ENCODE measurements at regions of chr11 and their contacts with region 1.

Region 1: GRCh38 chr11:18526521-18527296 is at the start of gene TSG101:
- DNase-seq: peak; percentile 86 to 96 (median 91)
- ATAC-seq: peak; percentile 91
- H3K4me3 ChIP-seq: peak within 1 kb of the TSS; percentile 94
- H3K4me3 Mint-ChIP-seq: peak within 1 kb of the TSS; percentile 93 to 100 (median 100)
- H3K27ac ChIP-seq: peak within 1 kb of the TSS; percentile 96
- H3K27ac Mint-ChIP-seq: peak within 1 kb of the TSS; percentile 99 to 100 (median 100)
- H3K4me1 ChIP-seq: peaks cover 18% of the 10 kb centered on the region in 2 donors
- H3K4me1 Mint-ChIP-seq: peaks cover 28 to 67% (median 55%) of the 10 kb centered on the region in 7 donors
- H3K27me3 ChIP-seq: no peaks in the 10 kb centered on the region
- H3K27me3 Mint-ChIP-seq: peaks cover 0 to 3% (median 0%) of the 10 kb centered on the region in 5 donors
- total RNA-seq, gene TSG101: 16.8 to 46.3 (median 36.3) TPM

Region 2: GRCh38 chr11:17077520-17078401 is 1448.9 kb before region 1 on chr11 and contains the start of gene RPS13:
- CTCF ChIA-PET with region 1: no interaction called
- POLR2A ChIA-PET with region 1: no interaction called
- intact Hi-C with region 1: loop called in 1 of 2 experiments (anchors 1 kb)
- DNase-seq: peak; percentile 76 to 95 (median 93)
- ATAC-seq: peak; percentile 98
- H3K4me3 ChIP-seq: peak within 1 kb of the TSS; percentile 87
- H3K4me3 Mint-ChIP-seq: peak within 1 kb of the TSS; percentile 91 to 99 (median 98)
- H3K27ac ChIP-seq: peak within 1 kb of the TSS; percentile 91
- H3K27ac Mint-ChIP-seq: peak within 1 kb of the TSS; percentile 96 to 99 (median 99)
- H3K4me1 ChIP-seq: peaks cover 12 to 27% of the 10 kb centered on the region in 2 donors
- H3K4me1 Mint-ChIP-seq: peaks cover 25 to 60% (median 37%) of the 10 kb centered on the region in 7 donors
- H3K27me3 ChIP-seq: no peaks in the 10 kb centered on the region
- H3K27me3 Mint-ChIP-seq: no peaks in the 10 kb centered on the region
- total RNA-seq, gene RPS13: 1,062 to 2,591 (median 2,234) TPM

Region 3: DNA sequence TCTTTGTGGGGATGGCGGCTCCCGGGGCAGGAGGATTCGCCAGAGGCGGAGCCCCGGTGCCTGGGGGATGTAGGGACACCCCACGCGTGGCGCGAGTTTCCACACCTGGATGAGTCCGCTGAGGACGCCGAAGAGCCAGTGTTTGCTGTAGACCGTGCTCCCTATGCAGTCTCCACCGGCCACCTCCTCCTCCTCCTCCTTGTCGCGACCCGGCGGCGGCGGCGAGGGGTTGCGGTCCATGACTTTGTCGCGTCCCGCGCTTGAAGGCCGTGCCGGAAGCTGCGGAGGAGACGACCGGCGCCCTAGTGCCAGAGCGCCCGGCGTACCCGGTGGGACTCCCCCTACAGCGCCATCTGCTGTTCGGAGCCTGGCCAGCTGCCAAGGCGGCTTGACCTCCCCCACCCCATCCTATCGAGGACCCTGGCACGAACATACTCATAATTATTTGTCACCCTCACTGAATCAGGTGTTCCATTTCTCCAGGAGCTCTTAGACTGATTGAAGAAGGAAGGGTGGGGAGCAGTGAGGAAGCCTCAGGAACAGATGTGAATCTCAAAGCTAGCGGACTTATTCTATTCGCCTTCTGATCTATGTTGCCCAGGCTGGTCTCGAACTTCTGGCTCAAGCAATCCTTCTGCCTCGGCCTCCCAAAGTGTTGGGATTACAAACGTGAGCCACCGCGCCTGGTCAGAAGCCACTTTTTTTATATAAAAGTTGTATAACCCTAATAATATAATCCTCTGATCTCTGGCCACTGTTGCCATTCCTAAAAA is 420.7 kb before region 1 on chr11 and contains the start of gene SAAL1:
- CTCF ChIA-PET with region 1: interaction called, 3 read pairs
- POLR2A ChIA-PET with region 1: interaction called, 3 read pairs
- intact Hi-C with region 1: loop called (anchors 1 to 2 kb)
- DNase-seq: peak; percentile 80 to 95 (median 84)
- ATAC-seq: peak; percentile 99
- H3K4me3 ChIP-seq: peak within 1 kb of the TSS; percentile 93
- H3K4me3 Mint-ChIP-seq: peak within 1 kb of the TSS; percentile 84 to 95 (median 93)
- H3K27ac ChIP-seq: peak within 1 kb of the TSS; percentile 78
- H3K27ac Mint-ChIP-seq: peak within 1 kb of the TSS; percentile 77 to 93 (median 90)
- H3K4me1 ChIP-seq: peaks cover 14 to 15% of the 10 kb centered on the region in 2 donors
- H3K4me1 Mint-ChIP-seq: peaks cover 21 to 54% (median 42%) of the 10 kb centered on the region in 7 donors
- H3K27me3 ChIP-seq: no peaks in the 10 kb centered on the region
- H3K27me3 Mint-ChIP-seq: peaks cover 0 to 15% (median 0%) of the 10 kb centered on the region in 5 donors
- total RNA-seq, gene SAAL1: 16.0 to 25.3 (median 19.3) TPM

Region 4: GRCh38 chr11:18321980-18322711 is 204.6 kb before region 1 on chr11 and contains the starts of genes GTF2H1 and HPS5:
- CTCF ChIA-PET with region 1: no interaction called
- POLR2A ChIA-PET with region 1: interaction called, 12 read pairs
- intact Hi-C with region 1: loop called (anchors 1 kb)
- DNase-seq: peak; percentile 88 to 99 (median 98)
- ATAC-seq: peak; percentile 93
- H3K4me3 ChIP-seq: peak within 1 kb of the TSS; percentile 96
- H3K4me3 Mint-ChIP-seq: peak within 1 kb of the TSS; percentile 85 to 100 (median 94)
- H3K27ac ChIP-seq: peak within 1 kb of the TSS; percentile 97
- H3K27ac Mint-ChIP-seq: peak within 1 kb of the TSS; percentile 99 to 100 (median 100)
- H3K4me1 ChIP-seq: peaks cover 32 to 33% of the 10 kb centered on the region in 2 donors
- H3K4me1 Mint-ChIP-seq: peaks cover 53 to 91% (median 81%) of the 10 kb centered on the region in 7 donors
- H3K27me3 ChIP-seq: no peaks in the 10 kb centered on the region
- H3K27me3 Mint-ChIP-seq: peaks cover 0 to 2% (median 0%) of the 10 kb centered on the region in 5 donors
- total RNA-seq, gene GTF2H1: 26.3 to 63.2 (median 59.0) TPM
- total RNA-seq, gene HPS5: 13.0 to 22.3 (median 16.6) TPM

Region 5: GRCh38 chr11:18540207-18541009 is 13.7 kb after region 1 on chr11:
- CTCF ChIA-PET with region 1: interaction called, 6 read pairs
- POLR2A ChIA-PET with region 1: interaction called, 14 read pairs
- intact Hi-C with region 1: no loop called
- DNase-seq: peak in 6 of 9 donors; percentile 30 to 60 (median 44)
- ATAC-seq: peak; percentile 73
- H3K4me3 ChIP-seq: no peak overlapping the region
- H3K4me3 Mint-ChIP-seq: no peak overlapping the region
- H3K27ac ChIP-seq: no peak overlapping the region
- H3K27ac Mint-ChIP-seq: peak overlapping the region in 2 of 9 donors; percentile 2 to 13
- H3K4me1 ChIP-seq: no peaks in the 10 kb centered on the region
- H3K4me1 Mint-ChIP-seq: peaks cover 0 to 8% (median 0%) of the 10 kb centered on the region in 7 donors
- H3K27me3 ChIP-seq: no peaks in the 10 kb centered on the region
- H3K27me3 Mint-ChIP-seq: no peaks in the 10 kb centered on the region

Region 6: GRCh38 chr11:18669220-18669598 is 142.5 kb after region 1 on chr11:
- CTCF ChIA-PET with region 1: interaction called, 3 read pairs
- POLR2A ChIA-PET with region 1: interaction called, 10 read pairs
- intact Hi-C with region 1: no loop called
- DNase-seq: no peak
- ATAC-seq: no peak
- H3K4me3 ChIP-seq: no peak overlapping the region
- H3K4me3 Mint-ChIP-seq: peak overlapping the region in 2 of 10 donors; percentile 1 to 28
- H3K27ac ChIP-seq: no peak overlapping the region
- H3K27ac Mint-ChIP-seq: peak overlapping the region in 8 of 9 donors; percentile 6 to 89 (median 54)
- H3K4me1 ChIP-seq: peaks cover 20 to 26% of the 10 kb centered on the region in 2 donors
- H3K4me1 Mint-ChIP-seq: peaks cover 34 to 74% (median 54%) of the 10 kb centered on the region in 7 donors
- H3K27me3 ChIP-seq: no peaks in the 10 kb centered on the region
- H3K27me3 Mint-ChIP-seq: peaks cover 0 to 17% (median 0%) of the 10 kb centered on the region in 5 donors

Region 7: DNA sequence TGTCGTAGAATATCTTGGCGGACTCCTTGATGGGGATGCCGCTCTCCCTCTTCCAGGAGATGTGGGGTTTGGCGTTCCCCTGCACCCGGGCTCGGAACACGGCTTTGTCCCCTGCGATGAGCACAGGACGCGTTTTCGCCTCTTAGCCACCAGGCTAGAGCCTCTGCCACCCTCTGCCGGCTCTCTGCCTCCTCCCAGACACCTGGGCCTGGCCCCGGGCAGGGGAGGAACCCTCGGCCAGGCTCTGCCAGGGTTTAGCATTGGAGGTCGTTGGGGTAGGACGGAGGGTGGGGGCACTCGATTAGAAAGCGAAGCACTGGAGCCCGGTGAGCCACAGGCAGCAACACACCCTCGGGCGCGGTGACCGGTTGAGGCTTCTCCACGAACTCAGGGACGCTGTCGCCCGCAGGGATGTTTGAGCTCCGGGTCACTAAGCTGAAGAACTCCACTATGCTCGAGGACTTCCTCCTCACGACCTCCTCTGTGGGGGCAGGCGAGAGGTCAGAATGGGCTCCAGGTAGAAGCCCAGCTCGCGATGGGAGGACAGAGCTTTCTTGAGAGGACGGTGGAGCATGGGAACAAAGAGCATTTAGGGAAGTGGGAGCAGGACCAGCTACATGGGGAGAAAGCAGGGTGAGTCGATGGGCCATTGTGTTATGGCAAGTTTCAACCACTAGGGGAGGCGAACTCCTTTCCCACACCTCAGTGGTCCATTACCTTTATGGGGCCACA is 195.0 kb after region 1 on chr11:
- CTCF ChIA-PET with region 1: no interaction called
- POLR2A ChIA-PET with region 1: interaction called, 9 read pairs
- intact Hi-C with region 1: loop called (anchors 2 to 5 kb)
- DNase-seq: peak; percentile 15 to 51 (median 37)
- ATAC-seq: peak; percentile 61
- H3K4me3 ChIP-seq: peak overlapping the region; percentile 72
- H3K4me3 Mint-ChIP-seq: peak overlapping the region; percentile 82 to 97 (median 92)
- H3K27ac ChIP-seq: peak overlapping the region; percentile 46
- H3K27ac Mint-ChIP-seq: peak overlapping the region in 6 of 9 donors; percentile 39 to 89 (median 76)
- H3K4me1 ChIP-seq: peaks cover 0 to 5% of the 10 kb centered on the region in 2 donors
- H3K4me1 Mint-ChIP-seq: peaks cover 8 to 15% (median 9%) of the 10 kb centered on the region in 7 donors
- H3K27me3 ChIP-seq: no peaks in the 10 kb centered on the region
- H3K27me3 Mint-ChIP-seq: peaks cover 0 to 34% (median 0%) of the 10 kb centered on the region in 5 donors